A549 (cell line): ENCODE measurements at regions of chr3 and their contacts with region 1.

Region 1: GRCh38 chr3:119365418-119365817 is 71.2 kb downstream of the ARHGAP31 start:
- DNase-seq: no peak
- ATAC-seq: no peak
- H3K4me3 ChIP-seq: no peak overlapping the region
- H3K27ac ChIP-seq: no peak overlapping the region
- H3K4me1 ChIP-seq: no peaks in the 10 kb centered on the region
- CTCF ChIP-seq: no peak
- EP300 ChIP-seq: no peak
- POLR2A ChIP-seq: no peak
- RAD21 ChIP-seq: no peak

Region 2: DNA sequence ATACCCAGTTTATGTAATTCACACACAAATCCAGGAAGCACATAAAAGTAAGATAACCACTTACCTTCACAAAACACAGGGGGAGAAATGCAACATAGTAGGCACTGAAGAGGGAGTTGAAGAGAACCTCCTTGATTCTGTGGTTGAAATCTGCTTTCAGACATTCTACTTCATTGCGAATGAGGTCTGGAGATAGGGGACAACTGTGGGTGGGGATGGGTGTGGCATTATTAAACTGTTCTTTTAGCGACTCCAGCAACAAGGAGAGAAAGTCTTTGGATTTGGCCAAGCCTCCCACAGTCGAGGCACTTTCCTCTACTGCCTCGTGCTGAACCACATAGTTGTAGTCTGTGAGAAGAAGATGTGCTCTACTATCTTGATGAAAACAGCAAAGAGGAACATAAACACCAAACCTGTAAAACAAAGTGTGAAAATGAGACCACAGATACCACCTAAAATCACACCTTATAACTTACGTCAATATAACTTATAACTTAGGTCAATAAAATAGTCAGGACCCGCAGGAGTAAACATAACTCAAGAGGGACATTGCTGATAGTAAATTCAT is 72.4 kb after region 1 on chr3:
- CTCF ChIA-PET with region 1: no interaction called
- POLR2A ChIA-PET with region 1: interaction called, 12 read pairs
- DNase-seq: no peak
- ATAC-seq: no peak
- H3K4me3 ChIP-seq: no peak overlapping the region
- H3K27ac ChIP-seq: no peak overlapping the region
- H3K4me1 ChIP-seq: no peaks in the 10 kb centered on the region
- CTCF ChIP-seq: no peak
- EP300 ChIP-seq: no peak
- POLR2A ChIP-seq: no peak
- RAD21 ChIP-seq: no peak